Panc1 (cell line): ENCODE measurements at regions of chr12 and their contacts with region 1.

Region 1: DNA sequence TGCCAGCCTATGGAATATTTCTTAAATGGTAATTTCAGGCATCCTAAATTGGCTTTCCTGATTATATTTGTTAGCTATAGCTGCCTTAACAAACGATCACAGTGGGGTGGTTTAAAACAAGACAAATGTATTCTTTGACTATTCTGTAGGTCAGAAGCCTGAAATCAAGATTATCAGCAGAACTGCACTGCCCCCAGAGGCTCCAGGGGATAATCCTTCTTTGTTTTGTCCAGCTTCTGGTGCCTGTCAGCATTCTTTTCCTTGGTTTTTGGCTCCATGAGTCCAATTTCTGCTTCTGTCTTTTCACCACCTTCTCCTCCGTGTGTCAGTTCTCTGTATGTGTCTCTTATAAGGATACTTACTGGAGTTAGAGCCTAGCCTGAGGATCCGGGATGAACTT is 1282.2 kb upstream of the USP15 start:
- DNase-seq: no peak
- ATAC-seq: no peak
- H3K4me3 ChIP-seq: no peak overlapping the region
- H3K27ac ChIP-seq: no peak overlapping the region
- H3K4me1 ChIP-seq: no peaks in the 10 kb centered on the region; the same call in 1 of the 2 replicates
- H3K27me3 ChIP-seq: no peaks in the 10 kb centered on the region
- CTCF ChIP-seq: peak; percentile 42

Region 2: DNA sequence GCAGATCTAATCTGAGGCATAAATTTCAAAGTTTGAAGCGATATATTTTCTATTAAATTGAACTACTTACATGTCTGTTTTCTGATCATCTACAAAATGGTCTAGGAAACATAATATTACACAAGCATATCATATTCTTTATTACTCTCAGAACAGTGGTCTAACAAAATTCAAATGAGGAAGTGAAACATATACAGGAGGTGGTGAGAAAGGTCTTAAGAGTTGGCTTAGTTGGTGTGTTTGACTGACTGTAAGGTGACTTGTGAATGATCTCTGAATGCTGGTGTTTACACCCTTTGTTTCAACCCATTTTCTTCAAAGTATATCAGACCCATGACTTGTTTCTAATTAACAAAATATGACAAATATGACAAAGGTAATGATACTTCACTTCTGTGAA is 225.4 kb before region 1 on chr12:
- CTCF ChIA-PET with region 1: no interaction called
- POLR2A ChIA-PET with region 1: no interaction called
- in situ Hi-C with region 1: no loop called
- intact Hi-C with region 1: no loop called
- DNase-seq: no peak
- ATAC-seq: no peak
- H3K4me3 ChIP-seq: no peak overlapping the region
- H3K27ac ChIP-seq: no peak overlapping the region
- H3K4me1 ChIP-seq: no peaks in the 10 kb centered on the region
- H3K27me3 ChIP-seq: no peaks in the 10 kb centered on the region
- CTCF ChIP-seq: no peak

Region 3: GRCh38 chr12:60805364-60805763 is 172.6 kb before region 1 on chr12:
- CTCF ChIA-PET with region 1: no interaction called
- POLR2A ChIA-PET with region 1: no interaction called
- in situ Hi-C with region 1: no loop called
- intact Hi-C with region 1: loop called (anchors 10 kb)
- DNase-seq: no peak
- ATAC-seq: no peak
- H3K4me3 ChIP-seq: no peak overlapping the region
- H3K27ac ChIP-seq: no peak overlapping the region
- H3K4me1 ChIP-seq: no peaks in the 10 kb centered on the region
- H3K27me3 ChIP-seq: no peaks in the 10 kb centered on the region
- CTCF ChIP-seq: no peak

Region 4: GRCh38 chr12:62215506-62215905 is 1237.5 kb after region 1 on chr12:
- CTCF ChIA-PET with region 1: interaction called, 10 read pairs
- POLR2A ChIA-PET with region 1: no interaction called
- in situ Hi-C with region 1: no loop called
- intact Hi-C with region 1: no loop called
- DNase-seq: no peak
- ATAC-seq: no peak
- H3K4me3 ChIP-seq: no peak overlapping the region
- H3K27ac ChIP-seq: no peak overlapping the region
- H3K4me1 ChIP-seq: 0 out of 2 replicates have a peak, but pooled peaks cover 2% of the 10 kb centered on the region
- H3K27me3 ChIP-seq: peaks cover 15% of the 10 kb centered on the region
- CTCF ChIP-seq: no peak